IMR-90 (cell line): ENCODE measurements at regions of chr2 and their contacts with region 1.

Region 1: DNA sequence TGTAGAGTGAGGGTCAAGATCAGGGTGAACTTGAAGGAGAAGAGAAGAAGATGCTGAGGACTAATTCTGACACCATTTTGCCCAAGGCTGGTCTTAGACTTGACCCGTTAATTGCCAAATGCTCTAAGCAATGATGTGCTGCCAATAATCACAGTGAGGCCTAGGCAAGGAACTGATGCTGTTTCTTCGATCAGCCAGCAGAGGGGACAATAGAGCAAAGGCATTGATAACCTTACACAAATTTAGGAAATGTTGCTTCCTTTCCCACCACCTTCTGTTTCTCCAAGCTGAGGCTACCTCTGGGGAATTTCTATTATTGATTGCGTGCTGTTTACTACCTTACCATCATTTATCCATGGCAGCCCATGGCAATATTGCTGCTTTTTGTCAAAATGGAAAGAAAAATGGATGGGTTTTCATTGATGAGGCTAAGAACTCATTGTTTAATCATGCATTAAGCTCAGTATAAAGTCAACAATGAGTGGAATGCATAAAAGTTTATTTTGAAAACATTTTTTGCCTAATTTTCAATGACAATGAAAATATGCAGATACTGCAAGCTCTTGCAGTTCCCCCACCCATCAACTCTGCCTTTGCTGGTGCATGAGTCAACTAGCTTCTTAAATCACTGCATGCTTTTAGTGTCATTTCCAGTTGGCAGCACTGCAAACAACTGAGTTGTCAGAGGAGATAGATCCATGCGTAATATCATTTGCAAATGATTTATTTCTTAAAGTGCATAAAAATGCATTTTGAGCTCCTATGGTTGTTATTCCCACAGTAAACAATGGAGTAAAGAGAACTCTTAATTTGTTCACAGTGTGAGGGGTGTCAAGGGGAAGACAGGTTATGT is 116.4 kb upstream of the NYAP2 start:
- DNase-seq: peak; percentile 41
- ATAC-seq: peak; percentile 71; the same call in 1 of the 2 replicates
- H3K4me3 ChIP-seq: no peak overlapping the region
- H3K27ac ChIP-seq: no peak overlapping the region
- H3K4me1 ChIP-seq: no peaks in the 10 kb centered on the region
- H3K27me3 ChIP-seq: peaks cover 20% of the 10 kb centered on the region
- CTCF ChIP-seq: peak; percentile 65
- POLR2A ChIP-seq: no peak
- RAD21 ChIP-seq: peak; percentile 54

Region 2: DNA sequence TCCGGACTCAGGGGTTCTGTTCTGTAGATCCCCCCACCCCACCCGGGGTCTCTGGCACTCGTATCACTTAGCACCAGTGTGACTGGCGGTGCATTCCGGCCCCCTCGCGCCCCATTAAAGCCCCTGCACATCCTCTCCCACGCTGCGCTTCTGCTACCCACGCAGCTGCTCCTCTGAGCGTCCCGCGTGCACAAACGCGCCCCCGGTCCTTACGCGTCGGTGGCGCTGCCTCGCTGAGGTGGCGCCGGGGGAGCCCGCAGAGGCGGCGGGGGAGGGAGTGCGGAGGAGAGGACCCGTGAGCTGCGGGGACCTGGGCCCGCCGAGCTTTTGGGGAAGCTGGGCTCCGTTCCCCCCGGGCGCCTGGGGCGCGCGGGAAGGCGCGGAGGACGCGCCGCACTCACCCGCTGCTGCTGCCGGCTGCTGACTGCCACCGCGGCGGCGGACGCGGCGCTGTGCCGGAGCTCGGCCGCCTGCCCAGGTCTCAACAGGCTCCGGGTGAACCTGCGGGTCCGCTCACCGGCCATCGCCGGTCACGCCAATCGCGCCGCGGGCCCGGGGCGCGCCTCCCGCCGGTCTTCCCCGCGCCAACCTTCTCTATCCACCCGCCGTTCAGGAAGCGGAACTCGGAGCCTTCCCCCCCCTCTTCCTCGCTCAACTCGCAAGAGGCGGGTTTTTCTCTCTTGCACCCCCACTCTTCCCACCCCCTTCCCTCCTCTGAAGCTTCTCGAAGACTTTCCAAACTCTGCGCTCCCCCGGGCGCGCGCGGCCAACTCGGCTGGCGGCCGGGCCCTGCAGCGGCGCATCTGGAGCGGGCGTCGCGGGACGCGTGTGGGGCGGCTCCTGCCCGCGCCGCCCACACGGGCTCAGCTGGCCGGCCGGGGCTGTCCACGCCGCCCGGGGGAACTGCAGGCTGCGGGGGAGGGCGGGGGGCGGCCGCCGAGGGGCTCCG is 241.0 kb before region 1 on chr2 and contains the start of gene DOCK10:
- CTCF ChIA-PET with region 1: no interaction called
- POLR2A ChIA-PET with region 1: no interaction called
- dilution Hi-C with region 1: no loop called
- in situ Hi-C with region 1: no loop called
- intact Hi-C with region 1: loop called (anchors 10 kb)
- DNase-seq: peak; percentile 69
- ATAC-seq: peak; percentile 72
- H3K4me3 ChIP-seq: peak within 1 kb of the TSS; percentile 87
- H3K27ac ChIP-seq: peak within 1 kb of the TSS; percentile 27; the same call in 1 of the 2 replicates
- H3K4me1 ChIP-seq: peaks cover 2% of the 10 kb centered on the region; the same call in 1 of the 2 replicates
- H3K27me3 ChIP-seq: no peaks in the 10 kb centered on the region
- CTCF ChIP-seq: no peak
- POLR2A ChIP-seq: peak; percentile 10; the same call in 1 of the 2 replicates
- RAD21 ChIP-seq: no peak
- total RNA-seq, gene DOCK10: 63.6 and 75.3 TPM in 2 replicates

Region 3: DNA sequence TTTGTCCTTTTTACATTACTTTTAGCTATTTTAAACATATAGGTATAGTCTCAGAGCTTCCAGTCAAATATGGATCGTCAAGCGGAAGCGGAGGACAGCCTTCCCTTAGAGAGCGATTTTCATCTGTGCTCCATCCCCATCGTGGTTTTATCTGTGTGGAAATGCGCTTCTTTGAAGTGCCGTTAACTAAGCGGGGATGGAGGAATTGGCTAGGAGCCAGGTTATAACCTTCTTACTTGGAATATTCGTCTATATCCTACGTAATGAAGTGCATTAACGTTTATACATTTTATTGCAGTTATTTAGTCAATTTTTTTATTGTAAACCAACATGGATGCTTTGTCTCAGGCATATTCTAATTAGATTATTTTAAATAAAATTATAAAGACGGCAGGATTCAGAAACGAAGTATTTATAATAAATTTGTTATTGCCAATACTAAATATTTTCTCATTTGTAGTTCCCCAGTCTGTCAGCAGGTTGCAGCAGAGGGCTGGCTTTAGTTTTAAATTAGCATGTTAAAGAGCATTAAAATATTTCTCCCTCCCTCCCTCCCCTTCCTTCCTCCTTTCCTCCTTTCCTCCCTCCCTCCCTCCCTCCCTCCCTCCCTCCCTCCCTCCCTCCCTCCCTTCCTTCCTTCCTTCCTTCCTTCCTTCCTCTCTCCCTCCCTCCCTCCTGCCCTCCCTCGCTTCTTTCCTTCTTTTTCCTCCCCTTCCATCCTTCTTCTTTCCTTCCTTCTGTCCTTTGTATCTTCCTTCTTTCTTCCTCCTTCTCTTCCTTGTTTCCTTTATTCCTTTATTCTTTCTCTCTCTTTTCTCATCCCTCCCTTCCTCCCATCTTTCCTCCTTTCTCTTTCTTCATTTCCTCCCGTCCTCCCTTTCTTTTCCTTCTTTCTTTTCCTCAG is 160.2 kb before region 1 on chr2:
- CTCF ChIA-PET with region 1: no interaction called
- POLR2A ChIA-PET with region 1: no interaction called
- dilution Hi-C with region 1: no loop called
- in situ Hi-C with region 1: no loop called
- intact Hi-C with region 1: loop called (anchors 2 kb)
- DNase-seq: peak; percentile 47
- ATAC-seq: peak; percentile 70; the same call in 1 of the 2 replicates
- H3K4me3 ChIP-seq: no peak overlapping the region
- H3K27ac ChIP-seq: no peak overlapping the region
- H3K4me1 ChIP-seq: no peaks in the 10 kb centered on the region; the same call in 1 of the 2 replicates
- H3K27me3 ChIP-seq: no peaks in the 10 kb centered on the region
- CTCF ChIP-seq: peak; percentile 65
- POLR2A ChIP-seq: no peak
- RAD21 ChIP-seq: peak; percentile 72